H1 (cell line): ENCODE measurements at regions of chr2 and their contacts with region 1.

Region 1: DNA sequence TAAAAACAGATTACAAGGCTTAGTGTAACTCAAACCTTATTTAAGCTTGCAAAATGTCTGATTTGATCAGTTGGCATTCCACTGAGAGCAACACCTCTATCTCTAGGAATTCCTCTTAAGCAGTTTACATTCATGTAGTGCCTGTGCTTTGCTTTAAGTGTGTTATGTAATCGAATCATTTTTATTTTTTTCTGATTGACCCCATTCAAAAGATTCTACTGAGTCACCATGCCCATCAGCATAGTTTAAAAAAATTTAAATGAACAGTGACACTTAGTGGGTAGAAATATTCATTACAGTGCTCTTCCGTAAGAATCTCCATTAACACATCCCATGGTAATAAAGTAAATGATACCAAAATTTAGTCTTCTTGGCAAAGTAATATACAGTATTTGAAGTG is 67.8 kb upstream of the SLC4A10 start:
- DNase-seq: no peak
- H3K4me3 ChIP-seq: no peak overlapping the region
- H3K27ac ChIP-seq: no peak overlapping the region
- H3K4me1 ChIP-seq: no peaks in the 10 kb centered on the region
- H3K27me3 ChIP-seq: no peaks in the 10 kb centered on the region
- CTCF ChIP-seq: no peak
- EP300 ChIP-seq: no peak
- POLR2A ChIP-seq: no peak
- RAD21 ChIP-seq: peak in 1 of 2 experiments; percentile 24

Region 2: GRCh38 chr2:161570424-161571050 is 14.1 kb after region 1 on chr2:
- CTCF ChIA-PET with region 1: interaction called, 15 read pairs
- POLR2A ChIA-PET with region 1: no interaction called
- DNase-seq: no peak
- H3K4me3 ChIP-seq: no peak overlapping the region
- H3K27ac ChIP-seq: no peak overlapping the region
- H3K4me1 ChIP-seq: no peaks in the 10 kb centered on the region
- H3K27me3 ChIP-seq: no peaks in the 10 kb centered on the region
- CTCF ChIP-seq: peak; percentile 30 to 52 (median 47); a peak in 3 of 4 replicates
- EP300 ChIP-seq: no peak
- POLR2A ChIP-seq: no peak
- RAD21 ChIP-seq: peak; percentile 31 to 44; a peak in 3 of 4 replicates

Region 3: DNA sequence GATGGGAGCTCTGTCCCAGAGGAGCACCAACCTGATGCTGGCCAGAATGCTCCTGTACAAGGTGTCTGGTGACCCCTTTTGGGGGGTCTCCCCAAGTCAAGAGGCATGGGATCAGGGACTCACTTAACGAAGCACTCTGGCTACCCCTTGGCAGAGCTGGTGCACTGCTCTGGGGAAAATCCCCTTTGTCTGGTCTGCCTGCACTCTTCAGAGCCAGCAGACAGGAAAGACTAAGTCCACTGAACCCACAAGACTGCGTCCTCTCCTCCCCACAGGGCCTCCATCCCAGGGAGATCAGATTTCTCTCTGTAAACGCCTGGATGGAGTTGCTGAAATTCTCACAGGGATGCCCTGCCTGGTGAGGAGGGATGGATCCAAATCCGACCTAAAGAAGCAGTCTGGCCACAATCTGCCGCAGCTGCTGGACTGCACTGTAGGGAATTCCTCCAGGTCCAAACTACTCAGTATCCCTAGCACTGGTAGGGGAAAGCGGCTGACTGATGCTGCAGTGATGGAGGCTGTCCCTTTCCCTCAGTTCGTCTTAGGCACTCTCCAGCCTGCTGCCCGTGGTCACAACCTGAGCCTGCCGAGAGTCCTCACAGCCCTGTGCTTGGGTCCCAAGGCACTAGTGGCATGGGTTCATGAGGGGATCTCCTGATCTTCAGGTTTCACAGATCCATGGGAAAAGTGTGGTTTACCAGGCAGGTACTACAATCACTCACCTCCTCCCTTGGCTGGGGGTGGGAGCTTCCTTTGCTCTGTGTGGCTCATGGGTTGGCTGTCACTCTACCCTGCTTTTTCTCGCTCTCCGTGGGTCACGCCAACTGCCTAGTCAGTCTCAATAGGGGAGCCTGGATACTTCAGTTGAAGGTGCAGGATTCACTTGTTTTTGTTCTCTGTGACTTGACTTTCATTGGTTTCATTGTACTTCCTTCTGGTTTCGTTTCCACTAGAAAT is 166.4 kb after region 1 on chr2:
- CTCF ChIA-PET with region 1: no interaction called
- POLR2A ChIA-PET with region 1: no interaction called
- DNase-seq: no peak
- H3K4me3 ChIP-seq: no peak overlapping the region
- H3K27ac ChIP-seq: no peak overlapping the region
- H3K4me1 ChIP-seq: no peaks in the 10 kb centered on the region
- H3K27me3 ChIP-seq: no peaks in the 10 kb centered on the region
- CTCF ChIP-seq: no peak
- EP300 ChIP-seq: no peak
- POLR2A ChIP-seq: no peak
- RAD21 ChIP-seq: no peak